ENCODE measurements at regions of chr3 and their contacts with region 1.

Region 1: GRCh38 chr3:45509768-45510129 is 84.8 kb upstream of the LIMD1 start:
- DNase-seq: no peak
- ATAC-seq: no peak
- H3K4me3 ChIP-seq: no peak overlapping the region
- H3K27ac ChIP-seq: no peak overlapping the region
- H3K4me1 ChIP-seq: peaks cover 31% of the 10 kb centered on the region
- H3K27me3 ChIP-seq: no peaks in the 10 kb centered on the region
- CTCF ChIP-seq: no peak

Region 2: GRCh38 chr3:45656575-45657363 is 147.0 kb after region 1 on chr3:
- intact Hi-C with region 1: loop called (anchors 5 kb)
- DNase-seq: peak; percentile 94
- ATAC-seq: peak; percentile 88 to 95
- H3K4me3 ChIP-seq: no peak overlapping the region
- H3K27ac ChIP-seq: peak overlapping the region; percentile 26
- H3K4me1 ChIP-seq: peaks cover 65% of the 10 kb centered on the region
- H3K27me3 ChIP-seq: no peaks in the 10 kb centered on the region
- CTCF ChIP-seq: peak; percentile 92